Activated T-helper 2 cell treated with anti-CD3 and anti-CD28 coated beads, Interferon-gamma antibody, Interleukin-2, Interleukin-4, amounts not matched to agents 10 μg/mL and 5 μg/mL and 100 μg/mL, durations not matched to agents 14 hours and 24 hours and 36 hours (primary cell): ENCODE measurements at regions of chr1 and their contacts with region 1.

Region 1: GRCh38 chr1:93528412-93528811 is 80.5 kb downstream of the FNBP1L start:
- DNase-seq: no peak
- H3K4me3 Mint-ChIP-seq: no peak overlapping the region
- H3K27ac Mint-ChIP-seq: no peak overlapping the region
- H3K4me1 Mint-ChIP-seq: no peaks in the 10 kb centered on the region
- H3K27me3 Mint-ChIP-seq: peaks cover 31% of the 10 kb centered on the region

Region 2: DNA sequence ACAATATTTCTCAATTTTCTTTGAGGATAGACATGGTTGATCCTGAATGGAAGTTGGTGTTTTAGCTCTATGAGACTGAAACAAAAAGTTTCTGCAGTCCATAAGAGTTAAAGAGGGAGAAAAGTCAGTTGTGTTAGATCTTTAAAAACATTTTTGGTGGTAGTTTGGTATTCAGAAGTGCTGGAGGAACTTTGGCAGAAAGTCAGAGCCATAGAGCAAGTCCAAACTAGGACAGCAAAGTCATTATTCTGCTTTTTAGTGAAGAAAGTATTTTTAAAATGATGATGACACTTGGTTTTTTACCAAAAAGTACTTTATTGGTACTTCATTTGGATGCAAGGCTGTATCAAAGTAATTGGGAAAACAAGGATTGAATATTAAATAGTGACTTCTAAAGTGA is 38.7 kb before region 1 on chr1:
- intact Hi-C with region 1: no loop called
- DNase-seq: no peak
- H3K4me3 Mint-ChIP-seq: no peak overlapping the region
- H3K27ac Mint-ChIP-seq: no peak overlapping the region
- H3K4me1 Mint-ChIP-seq: no peaks in the 10 kb centered on the region
- H3K27me3 Mint-ChIP-seq: peaks cover 41% of the 10 kb centered on the region

Region 3: GRCh38 chr1:93549811-93550210 is 21.4 kb after region 1 on chr1:
- intact Hi-C with region 1: loop called (anchors 1 kb)
- DNase-seq: no peak
- H3K4me3 Mint-ChIP-seq: no peak overlapping the region
- H3K27ac Mint-ChIP-seq: no peak overlapping the region
- H3K4me1 Mint-ChIP-seq: peaks cover 25% of the 10 kb centered on the region
- H3K27me3 Mint-ChIP-seq: peaks cover 27% of the 10 kb centered on the region